ENCODE measurements at regions of chr16 and their contacts with region 1.

Region 1: DNA sequence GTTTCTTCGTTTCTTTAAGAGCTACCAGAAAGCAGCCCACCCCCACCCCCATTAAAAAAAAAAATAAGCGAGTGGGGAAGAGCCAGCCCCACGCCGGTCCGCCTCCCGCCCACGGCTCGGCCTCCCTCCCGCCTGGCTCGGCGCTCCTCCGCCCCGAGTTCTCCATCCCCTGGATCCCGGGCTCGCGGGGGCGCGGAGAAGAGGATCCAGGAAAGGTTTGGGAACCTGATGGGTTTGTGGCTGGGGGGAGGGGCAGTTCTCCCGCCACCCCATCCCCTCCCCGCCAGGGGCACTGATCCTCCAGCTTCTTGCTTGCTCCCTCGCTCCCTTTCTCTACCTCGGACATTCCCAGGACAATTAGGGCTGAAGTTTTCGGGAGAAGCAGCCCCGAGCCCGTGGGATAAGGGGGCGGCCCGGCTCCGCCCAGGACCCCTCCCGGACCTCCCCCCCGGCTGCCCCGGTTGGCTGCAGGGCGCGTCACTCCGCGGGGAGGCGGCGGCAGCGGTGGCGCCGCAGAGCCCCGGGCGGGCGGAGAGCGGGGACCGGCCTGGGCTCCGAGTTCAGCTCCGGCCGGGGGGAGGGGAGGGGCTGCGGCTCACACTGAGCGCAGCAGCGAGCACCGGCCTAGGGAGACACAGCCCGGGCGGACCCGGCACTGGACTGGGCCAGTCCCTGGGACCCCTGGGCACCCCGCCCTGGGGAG is 1.0 kb upstream of the SALL1 start:
- DNase-seq: peak; percentile 33
- H3K4me3 ChIP-seq: peak overlapping the region in 3 of 4 donors; percentile 20 to 45 (median 23)
- H3K27ac ChIP-seq: peak overlapping the region; percentile 66 to 77 (median 72)
- H3K4me1 ChIP-seq: peaks cover 0 to 30% (median 15%) of the 10 kb centered on the region in 4 donors
- H3K27me3 ChIP-seq: peaks cover 99% of the 10 kb centered on the region
- CTCF ChIP-seq: no peak
- EP300 ChIP-seq: no peak
- POLR2A ChIP-seq: peak; percentile 17

Region 2: DNA sequence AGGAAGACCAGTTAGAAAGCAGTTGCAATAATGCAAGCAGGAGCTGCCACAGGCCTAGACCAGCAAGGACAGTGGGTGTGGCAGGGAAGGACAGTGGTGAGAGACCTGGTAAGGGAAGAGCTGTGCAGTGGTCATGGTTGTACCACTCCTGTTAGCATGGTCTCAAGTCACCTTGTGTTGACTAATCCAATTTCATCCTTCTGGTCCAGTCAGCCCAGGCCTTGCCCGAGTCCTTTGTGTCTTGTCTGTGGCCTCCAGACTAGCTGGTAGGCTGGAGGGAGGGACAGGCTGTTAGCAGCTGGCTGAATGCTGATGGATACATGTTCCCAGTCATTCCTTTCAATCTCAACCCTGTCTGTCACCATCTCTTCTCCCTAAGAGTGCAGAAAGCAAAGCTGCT is 729.2 kb before region 1 on chr16:
- in situ Hi-C with region 1: no loop called
- intact Hi-C with region 1: loop called (anchors 5 kb)
- DNase-seq: no peak
- H3K4me3 ChIP-seq: no peak overlapping the region
- H3K27ac ChIP-seq: no peak overlapping the region
- H3K4me1 ChIP-seq: no peaks in the 10 kb centered on the region
- H3K27me3 ChIP-seq: no peaks in the 10 kb centered on the region
- CTCF ChIP-seq: no peak
- EP300 ChIP-seq: no peak
- POLR2A ChIP-seq: no peak

Region 3: GRCh38 chr16:51084074-51084928 is 67.8 kb before region 1 on chr16:
- in situ Hi-C with region 1: no loop called
- intact Hi-C with region 1: no loop called
- DNase-seq: no peak
- H3K4me3 ChIP-seq: no peak overlapping the region
- H3K27ac ChIP-seq: no peak overlapping the region
- H3K4me1 ChIP-seq: no peaks in the 10 kb centered on the region
- H3K27me3 ChIP-seq: no peaks in the 10 kb centered on the region
- CTCF ChIP-seq: no peak
- EP300 ChIP-seq: no peak
- POLR2A ChIP-seq: no peak

Measured in transverse colon (tissue), 4 donors.